ENCODE measurements at regions of chrX and their contacts with region 1.

Region 1: DNA sequence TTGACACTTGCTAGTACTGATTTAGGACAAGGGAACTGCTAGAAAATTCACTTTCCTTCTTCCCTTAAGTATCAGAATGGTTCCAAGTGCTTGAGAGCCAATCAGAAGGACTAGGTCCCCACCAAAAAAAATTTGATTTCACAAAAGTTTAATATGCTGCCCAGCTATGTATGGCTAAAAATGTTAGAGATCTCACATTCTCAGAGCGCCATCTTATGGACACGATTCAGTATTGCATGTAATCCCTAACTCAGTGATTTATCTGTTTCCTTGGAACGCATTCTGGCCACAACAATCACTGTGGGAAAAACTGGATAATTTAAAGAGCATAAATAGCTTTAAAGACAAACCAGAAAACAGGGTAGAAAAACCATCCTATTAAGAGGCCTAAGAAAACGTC is 255.1 kb upstream of the GPC4 start:
- DNase-seq: no peak
- ATAC-seq: no peak
- H3K4me3 Mint-ChIP-seq: no peak overlapping the region
- H3K27ac Mint-ChIP-seq: no peak overlapping the region
- H3K4me1 Mint-ChIP-seq: no peaks in the 10 kb centered on the region
- H3K27me3 Mint-ChIP-seq: no peaks in the 10 kb centered on the region

Region 2: GRCh38 chrX:132984058-132984650 is 686.2 kb before region 1 on chrX:
- CTCF ChIA-PET with region 1: no interaction called
- POLR2A ChIA-PET with region 1: no interaction called
- intact Hi-C with region 1: loop called in 1 of 2 experiments (anchors 5 kb)
- DNase-seq: no peak
- ATAC-seq: no peak
- H3K4me3 Mint-ChIP-seq: no peak overlapping the region
- H3K27ac Mint-ChIP-seq: no peak overlapping the region
- H3K4me1 Mint-ChIP-seq: no peaks in the 10 kb centered on the region
- H3K27me3 Mint-ChIP-seq: peaks cover 8% of the 10 kb centered on the region

Region 3: DNA sequence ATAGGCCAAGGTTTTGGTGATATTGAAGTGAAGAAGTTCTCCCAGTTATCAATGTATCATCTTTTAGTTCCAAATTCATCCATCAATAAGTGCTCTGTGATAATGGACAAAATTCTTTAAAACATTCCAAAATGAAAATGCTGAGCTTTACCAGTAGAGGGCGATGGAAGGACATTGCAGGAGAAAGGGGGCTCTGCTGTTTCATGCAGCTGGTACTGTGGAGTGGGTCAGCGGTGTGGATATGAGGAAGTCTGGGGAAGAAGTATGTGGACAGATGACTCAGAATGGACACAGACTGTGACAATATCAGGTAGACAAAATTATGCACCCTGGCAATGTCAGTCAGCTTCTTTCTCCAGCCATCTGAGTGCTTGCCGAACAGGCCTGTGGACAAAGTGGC is 665.3 kb before region 1 on chrX:
- CTCF ChIA-PET with region 1: interaction called, 3 read pairs
- POLR2A ChIA-PET with region 1: no interaction called
- intact Hi-C with region 1: loop called in 1 of 2 experiments (anchors 10 kb)
- DNase-seq: no peak
- ATAC-seq: no peak
- H3K4me3 Mint-ChIP-seq: no peak overlapping the region
- H3K27ac Mint-ChIP-seq: no peak overlapping the region
- H3K4me1 Mint-ChIP-seq: no peaks in the 10 kb centered on the region
- H3K27me3 Mint-ChIP-seq: peaks cover 5% of the 10 kb centered on the region

Region 4: GRCh38 chrX:133335027-133335426 is 335.4 kb before region 1 on chrX:
- CTCF ChIA-PET with region 1: interaction called, 14 read pairs
- POLR2A ChIA-PET with region 1: no interaction called
- intact Hi-C with region 1: loop called (anchors 1 to 2 kb)
- DNase-seq: peak; percentile 10
- ATAC-seq: no peak
- H3K4me3 Mint-ChIP-seq: no peak overlapping the region
- H3K27ac Mint-ChIP-seq: no peak overlapping the region
- H3K4me1 Mint-ChIP-seq: no peaks in the 10 kb centered on the region
- H3K27me3 Mint-ChIP-seq: no peaks in the 10 kb centered on the region

Region 5: DNA sequence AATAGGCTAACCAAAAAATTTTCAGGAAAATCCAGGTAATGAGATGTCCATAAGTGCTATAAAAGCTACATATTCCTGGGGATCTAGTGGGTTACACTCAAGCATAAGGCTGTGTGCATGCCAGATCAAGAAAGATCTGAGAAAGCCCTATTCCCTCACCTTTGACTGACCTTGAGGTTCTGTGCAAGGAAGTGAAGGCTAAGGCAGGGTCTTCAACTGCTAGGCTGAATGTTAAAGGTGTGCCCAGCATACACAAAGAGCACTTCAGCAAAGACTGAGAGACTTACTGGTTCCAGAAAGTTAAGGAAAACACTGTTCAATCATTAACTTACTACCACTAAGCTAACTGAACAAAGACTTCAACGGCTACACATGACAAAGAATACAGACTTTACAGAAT is 45.3 kb after region 1 on chrX:
- CTCF ChIA-PET with region 1: no interaction called
- POLR2A ChIA-PET with region 1: no interaction called
- intact Hi-C with region 1: no loop called
- DNase-seq: no peak
- ATAC-seq: no peak
- H3K4me3 Mint-ChIP-seq: no peak overlapping the region
- H3K27ac Mint-ChIP-seq: no peak overlapping the region
- H3K4me1 Mint-ChIP-seq: peaks cover 2% of the 10 kb centered on the region
- H3K27me3 Mint-ChIP-seq: no peaks in the 10 kb centered on the region

Measured in activated CD4-positive, alpha-beta T cell treated with anti-CD3 and anti-CD28 coated beads for 36 hours (primary cell).